Common myeloid progenitor, CD34-positive (primary cell): ENCODE measurements at regions of chr10 and their contacts with region 1.

Region 1: GRCh38 chr10:100986952-100987750 is at the starts of genes MRPL43 and TWNK:
- DNase-seq: peak; percentile 73 to 83 (median 82)
- H3K4me3 ChIP-seq: peak within 1 kb of the TSS; percentile 65 to 98 (median 93)
- H3K27ac ChIP-seq: peak within 1 kb of the TSS in 1 of 2 experiments; percentile 76
- H3K4me1 ChIP-seq: peaks cover 4 to 36% (median 25%) of the 10 kb centered on the region in 4 experiments
- H3K27me3 ChIP-seq: no peaks in the 10 kb centered on the region

Region 2: DNA sequence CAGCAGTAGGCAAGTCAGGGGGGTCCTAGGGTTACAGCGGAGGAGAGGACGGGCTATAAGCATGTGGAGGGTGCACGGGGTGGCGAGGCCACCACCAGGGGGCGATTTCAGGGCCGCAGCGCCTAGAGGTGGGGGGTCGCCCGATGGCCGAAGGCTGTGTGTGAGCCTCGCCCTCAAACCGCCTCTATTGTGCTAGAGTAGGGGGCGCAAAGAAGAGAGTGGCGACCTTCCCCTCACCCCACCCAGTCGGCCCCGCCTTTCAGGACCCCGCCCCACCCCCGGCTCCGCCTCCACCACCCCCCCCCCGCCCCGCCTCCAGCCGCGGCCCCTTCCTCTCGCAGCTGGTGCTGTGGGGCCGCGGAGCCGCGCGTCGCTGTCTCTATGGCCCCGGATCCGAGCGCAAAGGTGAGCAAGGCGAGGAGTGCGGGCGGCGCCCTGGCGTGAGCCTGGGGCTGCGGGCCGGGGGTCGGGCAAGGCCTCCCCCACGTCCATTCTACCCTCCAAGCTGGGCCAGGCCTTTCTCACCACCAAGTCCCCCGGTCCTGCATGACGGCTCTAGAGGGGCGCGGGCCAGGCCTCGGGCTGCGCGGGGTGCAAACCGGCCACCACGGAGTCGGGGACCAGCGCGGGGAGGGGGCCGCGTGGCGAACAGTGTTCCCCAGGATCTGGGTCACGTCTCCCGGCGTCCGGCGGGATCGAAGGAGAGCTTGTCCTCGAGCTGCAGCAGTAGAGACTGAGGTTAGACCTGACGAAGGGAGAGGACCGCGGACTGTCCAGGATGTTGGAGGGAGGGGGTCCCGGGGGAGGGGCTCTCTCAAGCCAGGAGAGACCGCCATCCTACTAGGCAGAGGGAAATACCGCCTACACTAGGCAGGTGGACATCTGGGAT is 17.7 kb before region 1 on chr10 and contains the start of gene SEMA4G:
- CTCF ChIA-PET with region 1: interaction called, 16 read pairs
- POLR2A ChIA-PET with region 1: no interaction called
- DNase-seq: peak; percentile 52 to 70 (median 62)
- H3K4me3 ChIP-seq: peak within 1 kb of the TSS; percentile 23 to 79 (median 54)
- H3K27ac ChIP-seq: no peak within 1 kb of the TSS
- H3K4me1 ChIP-seq: peaks cover 0 to 19% (median 13%) of the 10 kb centered on the region in 4 experiments
- H3K27me3 ChIP-seq: peaks cover 0 to 4% (median 2%) of the 10 kb centered on the region in 5 experiments

Region 3: DNA sequence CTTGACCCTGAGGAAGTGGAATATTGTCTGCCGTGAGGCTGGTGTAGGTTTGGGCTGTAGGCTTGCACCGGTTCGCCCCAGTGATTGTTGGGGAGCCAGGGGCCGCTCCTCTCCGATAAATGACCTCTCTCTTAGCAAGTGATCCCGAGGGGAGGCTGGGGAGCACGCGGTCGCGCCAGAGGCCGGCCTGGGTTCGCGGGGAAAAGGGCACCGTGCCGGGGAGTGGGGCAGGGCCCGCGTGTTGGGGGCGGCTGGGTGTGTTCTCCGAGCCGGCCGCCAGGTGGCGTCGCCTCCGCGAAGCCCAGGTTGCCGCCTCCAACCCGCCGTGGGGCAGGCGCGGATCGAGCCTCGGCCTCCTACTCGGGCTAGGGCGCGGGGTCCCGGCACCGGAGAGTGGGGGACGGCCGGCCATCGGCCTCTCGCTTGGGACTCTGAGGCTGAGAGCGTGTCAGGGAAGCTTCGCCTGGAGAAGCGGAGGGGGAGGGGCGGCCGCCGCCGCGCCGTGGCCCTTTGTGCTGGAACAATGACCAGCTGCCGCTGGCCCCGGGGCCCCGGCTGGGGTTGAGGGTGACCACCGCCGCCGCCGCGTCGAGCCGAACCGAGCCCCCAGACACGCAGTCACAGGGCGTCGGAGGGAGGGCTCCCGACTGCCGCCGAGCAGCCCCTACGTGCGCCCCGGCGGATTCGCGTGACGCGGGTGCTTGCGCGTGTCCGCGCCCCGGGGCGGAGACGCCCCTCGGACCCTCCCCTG is 12.0 kb after region 1 on chr10:
- CTCF ChIA-PET with region 1: interaction called, 44 read pairs
- POLR2A ChIA-PET with region 1: interaction called, 3 read pairs
- DNase-seq: peak; percentile 70 to 81 (median 81)
- H3K4me3 ChIP-seq: peak overlapping the region; percentile 76 to 93 (median 84)
- H3K27ac ChIP-seq: peak overlapping the region; percentile 79 to 90
- H3K4me1 ChIP-seq: peaks cover 0 to 60% (median 50%) of the 10 kb centered on the region in 4 experiments
- H3K27me3 ChIP-seq: no peaks in the 10 kb centered on the region

Region 4: GRCh38 chr10:101038486-101038885 is 51.3 kb after region 1 on chr10:
- CTCF ChIA-PET with region 1: no interaction called
- POLR2A ChIA-PET with region 1: no interaction called
- DNase-seq: no peak
- H3K4me3 ChIP-seq: no peak overlapping the region
- H3K27ac ChIP-seq: no peak overlapping the region
- H3K4me1 ChIP-seq: peaks cover 0 to 31% (median 16%) of the 10 kb centered on the region in 4 experiments
- H3K27me3 ChIP-seq: no peaks in the 10 kb centered on the region